ENCODE measurements at regions of chr13 and their contacts with region 1.

Region 1: DNA sequence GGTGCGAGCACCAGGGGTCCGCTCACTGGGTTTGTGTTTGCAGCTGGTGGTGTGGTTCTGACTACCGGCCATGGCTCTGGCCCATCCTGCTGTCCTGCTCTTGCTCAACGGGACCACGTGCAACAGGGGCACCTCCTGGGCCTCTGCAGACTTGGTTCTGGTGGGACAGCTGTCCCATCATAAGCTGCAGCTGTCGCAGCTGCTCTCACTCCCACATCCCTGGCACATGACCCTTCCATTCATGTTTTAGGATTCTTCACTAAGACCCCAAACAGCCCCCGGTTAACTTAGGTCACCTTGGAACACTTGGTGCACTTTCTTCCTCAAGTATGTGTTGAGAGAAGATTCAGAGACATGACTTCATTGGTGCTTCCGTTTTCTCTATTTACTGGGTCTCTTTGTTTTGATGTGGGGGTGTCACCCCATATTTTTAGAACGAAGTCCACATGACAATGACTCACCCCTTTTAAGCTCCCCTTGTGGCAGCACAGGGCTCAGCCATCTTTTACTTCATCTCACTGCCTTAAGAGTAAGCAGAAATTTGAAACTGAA is 68.4 kb upstream of the ARHGEF7 start:
- DNase-seq: no peak
- ATAC-seq: no peak

Region 2: DNA sequence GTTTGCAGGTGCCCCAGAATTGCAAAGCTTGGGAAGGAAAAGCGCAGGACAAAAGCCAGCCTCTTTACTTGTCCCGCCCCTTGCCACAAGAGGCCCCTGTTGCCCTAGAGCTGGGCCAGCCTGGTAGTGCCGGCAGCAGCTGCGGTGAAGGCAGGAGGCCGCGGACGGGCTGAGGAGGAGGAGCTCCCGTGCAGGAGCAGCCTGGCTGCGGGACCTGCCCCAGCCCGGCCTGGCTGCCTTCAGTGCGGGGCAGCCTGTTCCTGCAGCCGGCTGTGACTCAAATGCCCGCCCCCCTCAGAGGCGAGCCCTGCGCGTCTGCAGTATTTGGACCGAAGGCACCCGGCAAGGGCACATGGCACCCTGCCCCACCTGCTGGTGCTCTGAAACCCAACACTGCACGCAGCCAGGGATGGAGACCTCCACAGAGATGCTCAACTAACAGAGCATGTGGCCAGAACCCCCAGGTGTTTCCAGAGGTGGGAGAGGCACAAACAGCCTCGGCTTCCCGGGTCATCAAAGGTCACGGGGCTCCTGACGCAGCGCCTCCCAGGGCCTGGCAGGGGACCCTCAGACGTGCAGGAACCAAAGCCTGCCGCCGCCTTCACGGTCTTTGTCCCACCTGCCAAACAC is 401.7 kb before region 1 on chr13:
- intact Hi-C with region 1: no loop called
- DNase-seq: peak; percentile 73 to 78
- ATAC-seq: peak; percentile 87

Region 3: DNA sequence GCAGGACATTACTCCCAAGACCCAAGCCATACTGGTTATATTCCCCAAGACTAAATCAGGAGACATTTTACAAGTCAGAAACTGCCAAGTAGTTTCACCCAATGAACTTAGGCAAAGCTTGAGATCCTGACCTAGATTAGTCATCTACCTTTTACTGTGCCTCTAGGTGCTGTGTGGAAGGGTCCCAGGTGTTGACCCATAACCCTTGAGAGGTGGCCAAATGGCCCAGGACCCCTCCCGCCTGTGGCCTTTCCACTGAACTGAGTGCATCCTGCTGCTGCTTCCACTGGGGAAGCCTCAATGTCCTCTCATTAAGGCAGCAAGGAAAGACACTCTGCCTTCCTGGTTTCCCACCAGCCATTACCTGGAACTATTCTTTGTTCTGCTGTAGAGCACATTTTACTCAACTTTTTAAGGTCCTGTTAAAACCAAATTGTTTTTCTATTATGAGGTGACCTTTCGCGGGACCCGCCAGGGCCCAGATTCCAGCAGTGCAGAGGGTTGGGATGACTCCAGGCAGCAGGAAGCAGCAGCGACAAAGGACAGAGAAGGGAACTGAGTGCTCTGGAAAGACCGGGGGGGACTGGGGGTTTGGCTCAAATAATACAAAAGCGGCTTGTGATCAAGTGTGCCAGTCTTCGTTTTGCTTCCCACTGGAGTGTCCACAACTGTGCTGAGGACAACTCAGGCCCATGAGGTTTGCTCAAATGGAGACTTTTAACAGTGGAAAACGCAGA is 158.9 kb before region 1 on chr13:
- intact Hi-C with region 1: no loop called
- DNase-seq: no peak
- ATAC-seq: peak; percentile 44

Region 4: GRCh38 chr13:110925023-110925612 is 121.5 kb before region 1 on chr13:
- intact Hi-C with region 1: loop called in 1 of 2 experiments (anchors 10 kb)
- DNase-seq: no peak
- ATAC-seq: no peak

Region 5: GRCh38 chr13:111539791-111540446 is 493.3 kb after region 1 on chr13:
- intact Hi-C with region 1: no loop called
- DNase-seq: peak in 1 of 2 donors; percentile 14
- ATAC-seq: no peak